Activated naive CD4-positive, alpha-beta T cell treated with anti-CD3 and anti-CD28 coated beads for 36 hours (primary cell): ENCODE measurements at regions of chr5 and their contacts with region 1.

Region 1: GRCh38 chr5:154202379-154203260 is 12.1 kb downstream of the GALNT10 start:
- DNase-seq: peak; percentile 86
- H3K4me3 Mint-ChIP-seq: peak overlapping the region; percentile 69
- H3K27ac Mint-ChIP-seq: peak overlapping the region; percentile 92
- H3K4me1 Mint-ChIP-seq: peaks cover 58% of the 10 kb centered on the region
- H3K27me3 Mint-ChIP-seq: no peaks in the 10 kb centered on the region

Region 2: DNA sequence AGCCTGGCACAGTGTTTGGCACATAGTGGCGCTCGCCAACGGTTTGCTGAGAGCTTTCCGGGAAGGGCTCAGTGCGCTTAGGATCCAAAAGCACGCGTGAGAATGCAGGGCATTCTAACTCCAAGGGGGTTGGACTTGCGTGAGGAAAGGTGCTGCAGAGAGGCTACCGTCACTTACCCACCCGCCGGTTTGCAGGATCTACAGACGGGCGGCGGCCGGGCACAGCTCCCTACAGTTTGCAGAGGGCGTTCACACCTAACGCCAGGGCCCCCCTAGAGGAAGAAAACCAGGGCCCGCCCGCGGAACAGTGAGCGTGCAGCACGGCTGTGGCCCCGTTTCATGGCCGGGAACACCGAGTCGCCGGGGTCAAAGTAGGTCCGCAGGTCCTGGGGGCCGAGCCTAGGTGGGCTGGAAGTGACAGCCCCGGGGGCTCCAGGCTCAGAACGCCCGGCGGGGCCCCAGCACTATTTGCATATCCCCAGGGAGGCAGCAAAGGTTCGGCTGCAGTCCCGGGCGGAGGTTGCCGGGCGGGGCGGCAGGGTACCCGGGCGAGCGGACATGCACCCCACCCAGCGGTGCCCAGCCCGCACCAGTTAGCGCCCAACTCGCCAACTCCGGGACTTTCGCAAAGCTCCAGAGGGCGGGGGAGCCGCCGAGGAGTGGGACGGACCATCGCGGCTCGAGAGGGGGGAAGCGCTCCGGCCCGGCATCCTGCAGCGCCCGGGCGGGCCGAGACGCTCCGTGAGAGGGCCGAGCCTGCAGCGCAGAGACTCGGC is 12.6 kb before region 1 on chr5:
- CTCF ChIA-PET with region 1: interaction called, 9 read pairs
- intact Hi-C with region 1: loop called (anchors 1 kb)
- DNase-seq: peak; percentile 82
- H3K4me3 Mint-ChIP-seq: peak overlapping the region; percentile 81
- H3K27ac Mint-ChIP-seq: no peak overlapping the region
- H3K4me1 Mint-ChIP-seq: peaks cover 32% of the 10 kb centered on the region
- H3K27me3 Mint-ChIP-seq: peaks cover 7% of the 10 kb centered on the region

Region 3: GRCh38 chr5:154260224-154260927 is 57.8 kb after region 1 on chr5:
- CTCF ChIA-PET with region 1: no interaction called
- intact Hi-C with region 1: no loop called
- DNase-seq: no peak
- H3K4me3 Mint-ChIP-seq: no peak overlapping the region
- H3K27ac Mint-ChIP-seq: no peak overlapping the region
- H3K4me1 Mint-ChIP-seq: no peaks in the 10 kb centered on the region
- H3K27me3 Mint-ChIP-seq: no peaks in the 10 kb centered on the region